Activated B cell treated with CpG ODN at 0.5 μM for 24 hours (primary cell): ENCODE measurements at regions of chr5 and their contacts with region 1.

Region 1: GRCh38 chr5:154221371-154221896 is 30.9 kb downstream of the GALNT10 start:
- DNase-seq: no peak
- ATAC-seq: peak; percentile 60
- H3K4me3 Mint-ChIP-seq: no peak overlapping the region
- H3K27ac Mint-ChIP-seq: peak overlapping the region; percentile 82
- H3K4me1 Mint-ChIP-seq: peaks cover 27% of the 10 kb centered on the region
- H3K27me3 Mint-ChIP-seq: no peaks in the 10 kb centered on the region
- CTCF ChIP-seq: no peak

Region 2: GRCh38 chr5:154202379-154203260 is 18.8 kb before region 1 on chr5:
- CTCF ChIA-PET with region 1: interaction called, 3 read pairs
- POLR2A ChIA-PET with region 1: no interaction called
- intact Hi-C with region 1: loop called (anchors 2 kb)
- DNase-seq: no peak
- ATAC-seq: peak; percentile 86
- H3K4me3 Mint-ChIP-seq: peak overlapping the region; percentile 44
- H3K27ac Mint-ChIP-seq: peak overlapping the region; percentile 47
- H3K4me1 Mint-ChIP-seq: peaks cover 32% of the 10 kb centered on the region
- H3K27me3 Mint-ChIP-seq: no peaks in the 10 kb centered on the region
- CTCF ChIP-seq: no peak